ENCODE measurements at regions of chr7 and their contacts with region 1.

Region 1: DNA sequence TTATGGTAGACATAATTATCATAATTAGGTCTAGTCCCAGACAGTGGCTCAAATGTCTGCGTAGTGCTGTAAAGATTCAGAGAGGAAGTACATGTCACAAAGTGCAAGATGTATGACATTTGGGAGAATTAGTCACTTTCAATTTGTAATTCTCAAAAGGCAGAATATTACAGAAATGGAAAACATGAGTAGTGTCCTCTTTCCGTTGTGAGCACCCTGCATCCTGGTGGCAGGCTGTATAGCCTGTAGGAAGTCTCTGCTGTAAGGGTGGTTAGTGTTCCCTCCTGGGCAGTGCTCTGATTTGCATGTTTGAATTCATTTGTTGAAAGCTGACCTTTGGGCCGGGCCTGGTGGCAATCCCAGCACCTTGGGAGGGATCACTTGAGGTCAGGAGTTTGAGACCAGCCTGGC is 17.0 kb downstream of the CDK14 start:
- DNase-seq: no peak
- H3K4me3 Mint-ChIP-seq: no peak overlapping the region
- H3K27ac Mint-ChIP-seq: peak overlapping the region; percentile 87
- H3K4me1 Mint-ChIP-seq: peaks cover 11% of the 10 kb centered on the region
- H3K27me3 Mint-ChIP-seq: no peaks in the 10 kb centered on the region

Region 2: GRCh38 chr7:90595801-90596671 is 17.1 kb before region 1 on chr7 and contains the start of gene CDK14:
- intact Hi-C with region 1: loop called (anchors 1 kb)
- DNase-seq: peak; percentile 30
- H3K4me3 Mint-ChIP-seq: peak within 1 kb of the TSS; percentile 79
- H3K27ac Mint-ChIP-seq: peak within 1 kb of the TSS; percentile 17
- H3K4me1 Mint-ChIP-seq: peaks cover 12% of the 10 kb centered on the region
- H3K27me3 Mint-ChIP-seq: peaks cover 61% of the 10 kb centered on the region
- total RNA-seq, gene CDK14: 2.1 and 2.2 TPM in 2 replicates

Measured in activated T-helper 2 cell treated with anti-CD3 and anti-CD28 coated beads, Interferon-gamma antibody, Interleukin-2, Interleukin-4, amounts not matched to agents 10 μg/mL and 5 μg/mL and 100 μg/mL, durations not matched to agents 14 hours and 24 hours and 36 hours (primary cell).